ENCODE measurements at regions of chr7 and their contacts with region 1.

Region 1: DNA sequence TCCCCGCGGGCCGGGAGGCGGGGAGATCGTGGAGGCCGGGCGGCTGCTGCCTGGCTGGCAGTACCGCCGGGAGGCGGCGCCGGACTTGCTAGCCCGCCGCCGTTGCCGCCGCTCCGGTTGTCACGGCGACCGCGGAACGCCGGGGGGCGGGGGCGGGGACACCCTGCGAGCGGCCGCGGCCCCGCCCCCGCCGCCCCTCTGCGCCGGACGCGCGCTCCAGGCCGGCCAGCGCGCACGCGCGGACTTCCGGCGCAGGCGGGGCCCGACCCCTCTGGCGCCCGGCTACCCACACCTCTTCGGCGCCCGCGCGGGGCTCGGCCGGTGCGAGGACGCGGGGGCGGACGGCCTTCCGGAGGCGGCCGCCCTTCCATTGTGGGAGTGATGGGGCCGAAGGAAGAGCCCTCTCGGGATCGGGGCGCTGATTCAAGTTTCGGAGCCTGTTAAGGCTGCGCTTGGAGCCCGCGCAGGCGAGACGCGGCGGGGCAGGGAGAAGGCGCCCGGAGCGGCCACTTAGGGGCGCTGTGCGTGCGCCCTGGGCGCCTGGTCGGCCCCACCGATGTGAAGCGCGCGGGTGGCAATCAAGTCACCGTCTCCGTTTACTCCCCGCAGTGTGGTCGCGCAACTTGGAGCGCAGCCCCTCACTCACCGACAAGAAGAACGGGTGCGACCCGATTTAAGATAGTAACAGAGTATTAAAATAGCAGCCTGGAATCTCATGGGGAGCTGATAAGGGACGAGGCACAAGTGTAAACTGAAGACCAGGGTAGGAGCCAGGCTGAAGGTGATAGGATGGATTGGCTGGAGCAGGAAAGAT is 448 bp upstream of the DPY19L1 start:
- DNase-seq: peak; percentile 91
- H3K4me3 Mint-ChIP-seq: peak overlapping the region; percentile 78
- H3K27ac Mint-ChIP-seq: peak overlapping the region; percentile 51
- H3K4me1 Mint-ChIP-seq: peaks cover 30% of the 10 kb centered on the region
- H3K27me3 Mint-ChIP-seq: no peaks in the 10 kb centered on the region

Region 2: DNA sequence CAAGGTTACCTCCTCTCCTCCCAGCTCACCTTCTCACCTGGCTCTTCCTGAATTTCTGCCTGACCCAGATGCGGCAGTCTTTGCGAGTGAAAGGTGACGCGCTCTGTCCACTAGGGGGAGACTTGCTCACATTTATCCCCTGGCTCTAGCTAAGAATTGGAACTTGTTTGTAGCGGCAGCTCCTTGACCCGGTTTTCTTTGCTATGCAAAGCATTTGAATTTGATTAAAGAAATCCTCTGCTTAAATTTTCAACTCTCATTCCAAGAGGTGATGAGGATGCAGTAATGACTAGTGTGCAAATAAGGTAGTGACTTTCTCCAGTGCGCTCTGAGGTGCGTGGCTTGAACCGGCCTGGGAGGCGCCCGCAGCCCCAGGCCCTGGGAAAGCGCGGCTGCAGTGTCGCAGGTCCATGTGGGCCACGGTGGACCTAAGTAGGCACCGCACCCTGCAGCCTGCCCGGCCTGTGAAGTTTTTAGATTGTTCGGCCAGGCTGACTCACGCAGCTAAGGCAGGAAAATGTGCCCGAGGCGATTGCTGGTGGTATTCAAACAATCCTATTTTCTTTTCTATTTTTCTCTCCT is 716.6 kb before region 1 on chr7:
- CTCF ChIA-PET with region 1: no interaction called
- POLR2A ChIA-PET with region 1: no interaction called
- intact Hi-C with region 1: loop called (anchors 5 kb)
- DNase-seq: peak; percentile 63
- H3K4me3 Mint-ChIP-seq: no peak overlapping the region
- H3K27ac Mint-ChIP-seq: no peak overlapping the region
- H3K4me1 Mint-ChIP-seq: peaks cover 2% of the 10 kb centered on the region
- H3K27me3 Mint-ChIP-seq: peaks cover 17% of the 10 kb centered on the region

Region 3: DNA sequence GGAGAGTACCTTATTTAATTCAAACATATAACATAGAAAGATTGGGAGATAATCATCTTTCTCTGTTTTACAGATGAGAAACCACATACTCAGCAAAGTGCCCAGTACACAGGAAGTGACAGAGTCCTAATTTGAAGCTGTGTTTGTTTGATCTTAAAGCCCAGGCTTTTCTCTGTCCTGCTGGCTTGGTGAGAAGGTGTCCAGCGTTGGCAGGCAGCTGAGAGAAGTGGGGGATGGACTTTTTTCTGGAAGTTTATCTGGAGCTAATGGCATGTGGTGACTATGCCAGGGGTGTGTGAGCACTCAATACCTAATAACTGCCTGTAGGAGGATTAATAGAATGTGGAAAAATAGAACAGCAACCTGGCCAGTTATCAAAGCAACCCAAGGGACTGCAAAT is 318.9 kb before region 1 on chr7:
- CTCF ChIA-PET with region 1: no interaction called
- POLR2A ChIA-PET with region 1: no interaction called
- intact Hi-C with region 1: loop called (anchors 1 kb)
- DNase-seq: no peak
- H3K4me3 Mint-ChIP-seq: no peak overlapping the region
- H3K27ac Mint-ChIP-seq: no peak overlapping the region
- H3K4me1 Mint-ChIP-seq: peaks cover 25% of the 10 kb centered on the region
- H3K27me3 Mint-ChIP-seq: no peaks in the 10 kb centered on the region

Region 4: DNA sequence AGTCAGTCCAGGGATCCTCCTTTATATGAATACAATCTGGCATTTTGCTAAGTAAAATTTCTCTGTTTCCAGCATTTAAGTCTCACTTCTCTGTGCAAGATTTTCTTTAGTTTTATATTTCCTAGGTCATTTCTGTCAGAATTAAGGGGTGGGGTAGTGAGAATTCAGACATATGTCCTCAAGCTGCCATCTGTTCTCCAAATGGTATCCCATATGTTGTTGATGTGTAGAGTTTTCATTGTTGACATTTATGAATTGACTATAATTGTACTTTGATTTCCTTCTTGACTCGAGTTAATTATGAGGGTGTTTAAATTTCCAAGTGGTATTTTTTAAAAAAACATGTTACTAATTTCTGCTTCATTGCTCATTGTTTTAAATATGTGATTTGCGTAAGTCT is 230.9 kb before region 1 on chr7:
- CTCF ChIA-PET with region 1: no interaction called
- POLR2A ChIA-PET with region 1: no interaction called
- intact Hi-C with region 1: no loop called
- DNase-seq: no peak
- H3K4me3 Mint-ChIP-seq: no peak overlapping the region
- H3K27ac Mint-ChIP-seq: no peak overlapping the region
- H3K4me1 Mint-ChIP-seq: no peaks in the 10 kb centered on the region
- H3K27me3 Mint-ChIP-seq: peaks cover 15% of the 10 kb centered on the region

Region 5: GRCh38 chr7:34823640-34824258 is 214.0 kb before region 1 on chr7:
- CTCF ChIA-PET with region 1: interaction called, 4 read pairs
- POLR2A ChIA-PET with region 1: no interaction called
- intact Hi-C with region 1: loop called (anchors 1 kb)
- DNase-seq: peak; percentile 68
- H3K4me3 Mint-ChIP-seq: no peak overlapping the region
- H3K27ac Mint-ChIP-seq: no peak overlapping the region
- H3K4me1 Mint-ChIP-seq: no peaks in the 10 kb centered on the region
- H3K27me3 Mint-ChIP-seq: no peaks in the 10 kb centered on the region

Region 6: DNA sequence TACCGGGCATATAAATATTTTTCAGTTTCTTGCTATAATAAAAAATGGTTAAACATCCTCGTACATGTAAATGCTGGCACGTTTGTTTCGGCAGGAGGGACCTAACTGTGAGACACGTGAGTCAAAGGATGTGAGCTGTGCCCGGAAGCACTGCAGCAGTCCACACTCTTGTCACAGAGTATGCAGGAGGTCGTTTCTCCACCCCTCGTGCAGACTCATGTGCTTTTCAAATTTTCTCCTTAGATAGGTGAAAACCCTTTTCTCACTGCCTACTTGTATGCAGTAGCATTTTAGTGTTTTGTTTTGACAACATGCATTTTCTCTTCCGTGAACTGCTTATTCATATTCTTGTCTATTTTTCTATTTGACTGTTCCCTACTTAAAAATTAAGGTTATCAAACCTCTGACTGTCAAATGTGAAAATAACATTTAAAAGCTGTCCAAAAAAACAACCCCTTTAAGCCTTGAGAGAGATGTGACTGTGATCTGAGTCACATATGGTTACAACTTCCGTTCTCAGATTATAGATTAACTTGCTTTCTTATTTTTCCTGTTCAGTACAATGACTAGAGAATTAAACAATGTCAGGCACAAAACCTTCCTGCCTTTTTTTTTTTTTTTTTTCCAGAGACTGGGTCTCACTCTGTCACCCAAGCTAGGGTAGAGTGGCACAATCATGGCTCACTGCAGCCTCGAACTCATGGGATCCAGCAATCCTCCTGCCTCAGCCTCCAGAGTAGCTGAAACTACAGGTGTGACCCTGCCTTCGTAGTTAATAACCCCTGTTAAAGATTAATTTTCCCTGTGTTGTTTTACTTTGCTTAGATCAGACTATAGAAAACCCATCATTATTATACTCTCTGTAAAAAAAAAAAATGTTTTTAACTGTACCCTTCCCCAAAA is 45.5 kb before region 1 on chr7:
- CTCF ChIA-PET with region 1: interaction called, 5 read pairs
- POLR2A ChIA-PET with region 1: interaction called, 5 read pairs
- intact Hi-C with region 1: loop called (anchors 1 kb)
- DNase-seq: peak; percentile 81
- H3K4me3 Mint-ChIP-seq: peak overlapping the region; percentile 23
- H3K27ac Mint-ChIP-seq: peak overlapping the region; percentile 83
- H3K4me1 Mint-ChIP-seq: peaks cover 29% of the 10 kb centered on the region
- H3K27me3 Mint-ChIP-seq: no peaks in the 10 kb centered on the region

Region 7: GRCh38 chr7:35025046-35025994 is 12.4 kb before region 1 on chr7:
- CTCF ChIA-PET with region 1: no interaction called
- POLR2A ChIA-PET with region 1: no interaction called
- intact Hi-C with region 1: no loop called
- DNase-seq: no peak
- H3K4me3 Mint-ChIP-seq: no peak overlapping the region
- H3K27ac Mint-ChIP-seq: no peak overlapping the region
- H3K4me1 Mint-ChIP-seq: peaks cover 16% of the 10 kb centered on the region
- H3K27me3 Mint-ChIP-seq: no peaks in the 10 kb centered on the region

Region 8: DNA sequence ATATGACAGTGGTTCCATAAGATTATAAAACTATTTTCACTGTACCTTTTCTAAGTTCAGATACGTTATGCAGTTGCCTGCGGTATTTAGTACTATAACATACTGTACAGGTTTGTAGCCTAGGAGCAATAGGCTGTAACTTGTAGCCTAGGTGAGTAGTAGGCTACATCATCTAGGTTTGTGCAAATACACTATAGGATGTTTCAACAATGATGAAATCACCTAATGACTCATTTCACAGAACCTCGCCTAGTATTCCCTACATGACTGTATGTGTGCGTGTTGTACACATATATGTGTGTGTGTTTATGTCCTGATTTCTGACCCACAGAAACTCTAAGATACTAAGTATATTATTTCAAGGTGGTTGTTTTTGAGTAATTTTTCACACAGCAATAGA is 518.2 kb after region 1 on chr7:
- CTCF ChIA-PET with region 1: no interaction called
- POLR2A ChIA-PET with region 1: no interaction called
- intact Hi-C with region 1: no loop called
- DNase-seq: no peak
- H3K4me3 Mint-ChIP-seq: no peak overlapping the region
- H3K27ac Mint-ChIP-seq: no peak overlapping the region
- H3K4me1 Mint-ChIP-seq: no peaks in the 10 kb centered on the region
- H3K27me3 Mint-ChIP-seq: peaks cover 4% of the 10 kb centered on the region

Region 9: DNA sequence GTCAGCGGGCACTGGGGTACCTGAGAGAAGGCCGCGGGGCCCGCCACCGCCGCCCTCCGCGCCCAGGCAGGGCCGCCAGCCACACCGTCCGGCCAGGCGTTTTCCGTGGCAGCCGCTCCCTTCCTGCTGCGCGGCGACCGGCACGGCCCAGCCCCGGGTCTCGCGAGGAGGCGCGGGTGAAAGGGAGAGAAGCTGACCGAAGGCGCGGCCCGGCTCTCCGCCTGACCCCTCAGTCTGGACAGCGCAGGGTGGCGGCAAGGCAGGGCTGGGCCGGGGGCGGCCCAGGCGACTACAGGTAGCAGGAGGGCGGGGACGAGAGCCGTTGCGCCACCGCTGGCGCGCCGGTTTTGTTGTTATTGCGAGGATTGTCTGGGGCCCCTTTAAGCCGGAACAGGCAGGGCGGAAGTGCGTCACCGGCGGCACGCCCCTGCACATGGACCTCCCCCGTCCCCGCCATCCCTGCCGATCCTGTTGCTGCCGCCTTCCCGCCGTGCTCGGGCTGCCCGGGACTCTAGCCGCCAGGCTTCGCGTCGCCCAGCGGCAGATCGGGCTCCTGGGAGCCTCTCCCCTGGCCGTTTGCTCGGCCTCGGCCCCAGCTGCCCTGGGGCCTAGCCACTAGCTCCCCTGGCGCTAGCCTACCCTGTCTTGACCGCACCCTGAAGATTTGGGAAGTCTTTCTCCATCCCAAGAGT is 657.2 kb after region 1 on chr7 and contains the start of gene HERPUD2:
- CTCF ChIA-PET with region 1: no interaction called
- POLR2A ChIA-PET with region 1: no interaction called
- intact Hi-C with region 1: loop called (anchors 2 kb)
- DNase-seq: peak; percentile 95
- H3K4me3 Mint-ChIP-seq: peak within 1 kb of the TSS; percentile 93
- H3K27ac Mint-ChIP-seq: peak within 1 kb of the TSS; percentile 98
- H3K4me1 Mint-ChIP-seq: peaks cover 45% of the 10 kb centered on the region
- H3K27me3 Mint-ChIP-seq: no peaks in the 10 kb centered on the region
- total RNA-seq, gene HERPUD2: 26.2 to 29.6 TPM

Region 10: DNA sequence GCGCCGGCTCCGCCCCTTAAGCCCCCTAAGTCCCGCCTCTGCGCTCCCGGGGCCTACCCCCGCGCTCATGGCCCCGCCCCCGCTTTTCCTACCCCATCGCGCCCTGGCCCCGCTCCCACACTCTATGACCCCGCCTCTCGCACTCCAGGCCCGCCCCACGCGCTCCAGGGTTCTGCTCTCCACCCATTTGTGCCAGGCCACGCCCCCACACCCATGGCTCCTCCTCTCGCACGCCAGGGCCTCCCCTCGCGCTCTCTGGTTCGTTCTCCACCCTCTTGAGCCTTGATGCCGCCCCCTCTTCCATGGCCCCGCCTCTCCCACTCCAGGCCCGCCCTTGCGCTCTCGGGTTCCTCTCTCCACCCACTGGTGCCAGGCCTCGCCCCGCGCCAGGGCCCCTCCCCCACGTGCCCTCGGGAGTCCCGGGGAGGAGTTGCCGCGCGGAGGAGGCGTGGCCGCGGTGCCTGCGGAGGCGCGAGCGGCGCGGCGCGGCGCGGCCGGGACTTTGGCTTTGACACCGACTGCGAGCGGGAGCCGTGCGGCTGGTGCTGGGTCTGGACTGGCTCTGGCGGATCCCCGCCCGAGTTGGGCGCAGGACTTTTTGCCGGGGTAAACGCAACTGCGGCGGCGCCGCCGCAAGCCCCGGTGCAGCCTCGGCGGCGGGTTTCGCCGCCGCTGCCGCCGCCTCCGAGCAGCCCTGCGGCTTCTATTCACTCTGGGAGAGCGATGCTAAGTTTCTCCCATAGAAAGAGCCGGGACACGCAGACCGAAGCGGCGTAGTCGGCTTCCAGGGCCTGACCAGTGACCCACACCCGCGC is 1115.2 kb after region 1 on chr7 and contains the start of gene EEPD1:
- CTCF ChIA-PET with region 1: no interaction called
- POLR2A ChIA-PET with region 1: no interaction called
- intact Hi-C with region 1: loop called (anchors 5 kb)
- DNase-seq: peak; percentile 100
- H3K4me3 Mint-ChIP-seq: peak within 1 kb of the TSS; percentile 75
- H3K27ac Mint-ChIP-seq: peak within 1 kb of the TSS; percentile 21
- H3K4me1 Mint-ChIP-seq: peaks cover 27% of the 10 kb centered on the region
- H3K27me3 Mint-ChIP-seq: no peaks in the 10 kb centered on the region
- total RNA-seq, gene EEPD1: 1.2 to 1.3 TPM